AG04450 (cell line): ENCODE measurements at regions of chr20 and their contacts with region 1.

Region 1: DNA sequence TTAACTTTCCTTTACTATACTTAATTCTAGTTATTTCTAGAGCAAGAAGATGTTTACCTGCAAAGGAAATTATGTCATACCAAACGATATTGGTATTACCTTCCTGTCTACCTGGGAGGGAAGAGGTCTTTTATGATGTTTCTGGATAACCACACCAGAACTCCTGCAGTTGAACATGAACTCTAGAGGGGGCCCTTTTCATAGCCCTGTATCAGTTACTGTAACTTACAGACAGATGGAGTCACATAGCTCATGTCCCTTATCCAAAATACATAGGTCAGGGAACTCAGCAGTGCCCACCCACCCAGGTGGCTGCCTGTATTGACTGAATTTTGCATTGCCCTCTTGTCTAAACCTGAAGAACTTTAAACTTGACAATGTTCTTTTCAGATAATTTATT is 35.1 kb upstream of the MYL9 start:
- DNase-seq: no peak
- H3K4me3 ChIP-seq: no peak overlapping the region
- H3K27ac ChIP-seq: no peak overlapping the region
- H3K27me3 ChIP-seq: no peaks in the 10 kb centered on the region
- CTCF ChIP-seq: peak; percentile 42

Region 2: GRCh38 chr20:36238760-36239159 is 267.5 kb before region 1 on chr20:
- CTCF ChIA-PET with region 1: no interaction called
- POLR2A ChIA-PET with region 1: interaction called, 10 read pairs
- DNase-seq: no peak
- H3K4me3 ChIP-seq: no peak overlapping the region
- H3K27ac ChIP-seq: no peak overlapping the region
- H3K27me3 ChIP-seq: no peaks in the 10 kb centered on the region
- CTCF ChIP-seq: no peak